ENCODE measurements at regions of chr12 and their contacts with region 1.

Region 1: DNA sequence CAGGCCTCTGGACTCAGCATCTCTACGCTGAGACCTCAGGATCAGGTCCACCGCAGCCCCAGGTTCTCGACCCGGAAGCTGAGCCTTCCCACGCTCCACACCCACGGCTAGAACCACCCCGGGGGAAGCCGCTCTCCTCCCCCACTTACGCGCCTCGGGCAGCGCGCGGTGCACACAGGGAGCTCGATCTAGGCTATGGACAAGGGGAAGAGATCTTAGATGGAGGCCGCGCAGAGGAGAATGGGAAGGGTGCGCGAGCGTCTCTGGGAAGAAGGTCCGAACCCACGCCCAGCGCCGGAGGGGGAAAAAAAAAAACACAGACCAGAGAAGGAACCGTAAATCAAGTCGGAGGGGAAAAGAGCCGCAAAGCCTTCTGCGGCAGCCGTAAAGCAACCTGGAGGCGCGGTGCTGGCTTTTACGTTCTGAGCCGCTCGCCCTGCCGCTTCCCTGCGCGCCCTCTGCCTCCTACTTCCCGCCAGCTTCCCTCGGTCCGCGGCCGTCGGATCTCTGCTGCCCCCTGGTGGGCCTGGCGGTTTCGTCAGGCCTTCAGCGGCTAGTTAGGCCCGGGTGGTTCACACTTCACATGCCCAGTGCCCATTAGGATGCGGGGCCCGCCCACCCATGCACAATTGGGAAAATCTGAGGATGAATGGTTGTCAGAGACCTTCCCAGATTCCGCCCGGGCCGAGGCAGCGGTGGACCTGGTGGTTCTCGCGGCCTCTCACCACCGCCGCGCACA is at the start of gene RAD52:
- DNase-seq: peak; percentile 99 to 100
- ATAC-seq: peak; percentile 99
- H3K4me3 ChIP-seq: peak within 1 kb of the TSS; percentile 66 to 77
- H3K27ac ChIP-seq: peak within 1 kb of the TSS; percentile 47 to 75
- H3K4me1 ChIP-seq: no peaks in the 10 kb centered on the region
- H3K27me3 ChIP-seq: no peaks in the 10 kb centered on the region
- total RNA-seq, gene RAD52: 13.2 to 25.7 TPM

Region 2: DNA sequence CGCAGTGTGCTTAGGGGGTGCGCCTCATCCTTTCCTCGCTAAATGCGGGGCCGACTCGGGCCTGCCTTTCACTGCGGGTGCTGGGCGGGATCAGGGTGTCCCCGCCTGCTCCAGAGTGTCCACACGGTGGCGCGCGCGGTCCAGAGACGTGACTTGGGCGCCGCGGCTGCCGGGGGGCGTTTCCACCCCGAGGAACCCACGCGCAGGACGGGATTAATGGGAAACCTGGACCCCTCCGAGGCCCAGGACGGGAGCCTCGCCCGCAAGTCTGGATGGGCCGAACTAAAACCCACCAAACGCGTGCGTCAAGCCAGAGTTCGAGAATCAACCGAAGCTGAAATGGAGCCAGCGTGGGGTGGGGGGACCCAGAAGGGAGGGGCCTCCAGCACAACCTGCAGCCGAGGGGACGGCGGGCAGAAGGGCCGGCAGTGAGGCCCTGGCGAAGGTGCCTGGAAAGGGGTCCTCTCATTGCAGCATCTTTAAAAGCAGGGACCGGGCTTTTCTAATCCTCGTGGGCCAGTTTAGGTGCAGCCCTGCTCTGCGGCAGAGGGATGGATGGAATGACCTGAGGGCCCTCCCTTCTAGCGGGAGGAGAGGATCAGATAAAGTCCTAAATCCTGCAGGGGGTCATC is 379.7 kb before region 1 on chr12:
- intact Hi-C with region 1: loop called (anchors 2 to 10 kb)
- DNase-seq: peak; percentile 93 to 98
- ATAC-seq: peak; percentile 94
- H3K4me3 ChIP-seq: peak overlapping the region; percentile 30 to 57
- H3K27ac ChIP-seq: peak overlapping the region in 1 of 2 donors; percentile 62
- H3K4me1 ChIP-seq: no peaks in the 10 kb centered on the region
- H3K27me3 ChIP-seq: no peaks in the 10 kb centered on the region

Region 3: DNA sequence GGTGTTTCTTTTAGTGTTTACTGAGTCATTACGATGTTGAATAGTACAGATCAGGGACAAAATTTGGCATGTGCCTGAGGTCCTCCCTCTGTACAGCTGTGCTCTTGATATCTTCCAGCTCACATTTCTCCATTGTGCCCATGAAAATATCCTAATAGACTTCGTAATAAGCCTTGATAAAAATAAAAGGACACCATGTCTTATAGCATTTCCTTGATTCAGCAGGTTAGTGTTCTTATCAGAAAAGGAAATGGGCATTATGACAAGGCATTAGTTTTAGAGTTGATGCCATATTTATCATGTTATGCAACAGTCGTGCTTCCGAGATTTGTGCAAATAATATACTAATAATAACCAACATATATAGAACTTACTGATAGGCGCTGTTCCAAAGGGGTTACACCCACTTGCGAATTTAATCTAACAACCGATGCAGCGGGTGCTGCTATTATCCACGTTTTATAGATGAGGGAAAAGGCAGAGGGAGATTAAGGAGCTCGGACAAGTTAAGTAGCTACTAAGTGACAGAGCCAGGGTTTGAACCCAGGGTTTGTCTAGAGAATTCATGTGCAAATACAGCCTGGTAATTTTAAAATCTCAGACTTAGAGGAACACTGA is 212.4 kb before region 1 on chr12:
- intact Hi-C with region 1: no loop called
- DNase-seq: no peak
- ATAC-seq: no peak
- H3K4me3 ChIP-seq: no peak overlapping the region
- H3K27ac ChIP-seq: no peak overlapping the region
- H3K4me1 ChIP-seq: no peaks in the 10 kb centered on the region
- H3K27me3 ChIP-seq: no peaks in the 10 kb centered on the region

Region 4: GRCh38 chr12:817941-818600 is 131.6 kb before region 1 on chr12:
- intact Hi-C with region 1: loop called (anchors 2 to 5 kb)
- DNase-seq: no peak
- ATAC-seq: no peak
- H3K4me3 ChIP-seq: no peak overlapping the region
- H3K27ac ChIP-seq: no peak overlapping the region
- H3K4me1 ChIP-seq: no peaks in the 10 kb centered on the region
- H3K27me3 ChIP-seq: no peaks in the 10 kb centered on the region

Region 5: GRCh38 chr12:896031-896430 is 53.6 kb before region 1 on chr12:
- intact Hi-C with region 1: loop called in 1 of 2 experiments (anchors 5 kb)
- DNase-seq: no peak
- ATAC-seq: no peak
- H3K4me3 ChIP-seq: no peak overlapping the region
- H3K27ac ChIP-seq: peak overlapping the region; percentile 33 to 73
- H3K4me1 ChIP-seq: peaks cover 0 to 5% of the 10 kb centered on the region in 2 donors
- H3K27me3 ChIP-seq: no peaks in the 10 kb centered on the region

Region 6: DNA sequence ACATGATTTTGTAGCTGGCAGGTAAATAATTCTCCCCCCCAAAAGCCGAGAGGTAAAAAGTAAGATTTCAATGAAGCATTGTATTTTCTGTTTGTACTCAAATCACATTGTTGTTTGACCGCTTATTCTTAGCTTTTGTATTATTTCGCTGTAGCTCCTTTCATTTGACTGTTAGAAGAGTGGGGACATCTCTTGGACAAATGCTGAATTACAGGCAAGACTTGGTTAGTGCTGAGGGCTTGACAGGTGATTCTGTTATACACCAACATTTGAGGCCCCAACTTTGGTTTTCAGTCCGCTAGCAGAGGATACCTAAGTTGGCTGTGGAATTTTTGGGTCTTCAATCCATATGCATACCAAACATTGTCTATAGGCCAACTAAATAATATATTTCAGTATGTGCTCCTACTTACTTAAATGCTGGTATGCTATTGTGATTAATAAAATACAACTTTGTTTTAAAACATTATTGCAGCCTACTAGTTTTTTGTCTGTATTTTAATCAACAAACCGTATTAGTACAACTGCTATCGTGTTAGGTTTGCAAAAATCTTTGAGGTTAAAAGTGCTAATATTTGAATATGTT is 143.6 kb after region 1 on chr12:
- intact Hi-C with region 1: loop called in 1 of 2 experiments (anchors 5 kb)
- DNase-seq: no peak
- ATAC-seq: no peak
- H3K4me3 ChIP-seq: no peak overlapping the region
- H3K27ac ChIP-seq: no peak overlapping the region
- H3K4me1 ChIP-seq: peaks cover 0 to 4% of the 10 kb centered on the region in 2 donors
- H3K27me3 ChIP-seq: no peaks in the 10 kb centered on the region

Measured in aorta (tissue), 5 donors.